Right cardiac atrium (tissue), 5 donors: ENCODE measurements at regions of chr2 and their contacts with region 1.

Region 1: GRCh38 chr2:198309673-198310280 is 505.4 kb downstream of the PLCL1 start:
- DNase-seq: no peak
- ATAC-seq: no peak
- H3K4me3 ChIP-seq: no peak overlapping the region
- H3K27ac ChIP-seq: no peak overlapping the region
- H3K4me1 ChIP-seq: no peaks in the 10 kb centered on the region
- H3K27me3 ChIP-seq: no peaks in the 10 kb centered on the region

Region 2: GRCh38 chr2:199488772-199489400 is 1179.1 kb after region 1 on chr2:
- intact Hi-C with region 1: loop called in 3 of 4 experiments (anchors 10 kb)
- DNase-seq: peak in 1 of 3 donors; percentile 34
- ATAC-seq: peak in 1 of 2 donors; percentile 26
- H3K4me3 ChIP-seq: no peak overlapping the region
- H3K27ac ChIP-seq: no peak overlapping the region
- H3K4me1 ChIP-seq: no peaks in the 10 kb centered on the region
- H3K27me3 ChIP-seq: no peaks in the 10 kb centered on the region

Region 3: GRCh38 chr2:199739413-199740110 is 1429.8 kb after region 1 on chr2:
- intact Hi-C with region 1: loop called in 3 of 4 experiments (anchors 10 kb)
- DNase-seq: peak; percentile 48 to 84 (median 81)
- ATAC-seq: peak; percentile 24 to 56
- H3K4me3 ChIP-seq: no peak overlapping the region
- H3K27ac ChIP-seq: no peak overlapping the region
- H3K4me1 ChIP-seq: no peaks in the 10 kb centered on the region
- H3K27me3 ChIP-seq: no peaks in the 10 kb centered on the region